Esophagus muscularis mucosa (tissue), 4 donors: ENCODE measurements at regions of chr20 and their contacts with region 1.

Region 1: GRCh38 chr20:32091888-32092346 is 17.6 kb upstream of the TM9SF4 start:
- DNase-seq: no peak
- H3K4me3 ChIP-seq: no peak overlapping the region
- H3K27ac ChIP-seq: no peak overlapping the region
- H3K4me1 ChIP-seq: no peaks in the 10 kb centered on the region
- H3K27me3 ChIP-seq: peaks cover 0 to 8% (median 0%) of the 10 kb centered on the region in 4 donors
- CTCF ChIP-seq: peak; percentile 64 to 96 (median 78)
- EP300 ChIP-seq: no peak
- POLR2A ChIP-seq: no peak

Region 2: GRCh38 chr20:31859998-31860709 is 231.8 kb before region 1 on chr20:
- intact Hi-C with region 1: loop called (anchors 10 kb)
- DNase-seq: no peak
- H3K4me3 ChIP-seq: peak overlapping the region; percentile 59 to 71 (median 61)
- H3K27ac ChIP-seq: no peak overlapping the region
- H3K4me1 ChIP-seq: peaks cover 20 to 25% (median 23%) of the 10 kb centered on the region in 4 donors
- H3K27me3 ChIP-seq: peaks cover 0 to 56% (median 6%) of the 10 kb centered on the region in 4 donors
- CTCF ChIP-seq: no peak
- EP300 ChIP-seq: no peak
- POLR2A ChIP-seq: no peak

Region 3: DNA sequence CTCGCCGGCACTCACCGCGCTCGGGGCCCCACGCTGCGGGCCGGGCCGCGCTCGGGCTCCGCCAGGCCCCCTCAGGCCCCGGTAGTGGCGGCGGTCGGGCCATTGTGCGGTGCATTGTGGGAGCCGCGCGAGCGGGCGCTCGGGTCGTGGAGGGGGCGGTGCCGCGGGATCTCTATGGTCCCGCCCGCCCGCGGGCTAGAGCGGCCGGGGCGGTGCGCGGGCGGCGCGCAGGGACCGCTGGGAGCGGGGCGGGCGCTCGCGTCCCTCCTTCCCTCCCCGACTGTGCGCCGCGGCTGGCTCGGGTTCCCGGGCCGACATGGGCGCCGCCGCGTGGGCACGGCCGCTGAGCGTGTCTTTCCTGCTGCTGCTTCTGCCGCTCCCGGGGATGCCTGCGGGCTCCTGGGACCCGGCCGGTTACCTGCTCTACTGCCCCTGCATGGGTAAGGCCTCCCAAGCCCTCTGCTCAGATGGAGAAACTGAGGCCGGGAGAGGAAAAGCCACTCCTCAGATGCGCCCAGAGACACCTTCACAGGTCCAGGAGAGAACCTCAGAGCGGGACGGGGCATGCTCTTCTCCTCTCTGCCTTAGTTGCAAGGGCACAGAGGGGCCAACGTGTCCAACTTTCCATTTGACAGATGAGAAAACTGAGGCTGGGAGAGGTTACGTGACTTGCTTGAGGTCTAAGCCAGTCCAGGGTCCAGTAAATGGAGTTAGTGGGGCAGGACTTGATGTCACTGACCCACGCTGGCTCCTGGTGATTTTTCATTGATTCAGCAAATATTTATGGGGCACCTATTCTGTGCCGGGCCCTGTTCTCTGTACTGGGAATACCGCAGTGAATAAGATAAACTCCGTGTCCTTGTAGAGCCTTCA is 115.9 kb after region 1 on chr20 and contains the starts of genes PLAGL2 and POFUT1:
- intact Hi-C with region 1: no loop called
- DNase-seq: peak; percentile 93
- H3K4me3 ChIP-seq: peak within 1 kb of the TSS; percentile 94 to 99 (median 97)
- H3K27ac ChIP-seq: peak within 1 kb of the TSS; percentile 88 to 92 (median 91)
- H3K4me1 ChIP-seq: peaks cover 45 to 69% (median 60%) of the 10 kb centered on the region in 4 donors
- H3K27me3 ChIP-seq: no peaks in the 10 kb centered on the region
- CTCF ChIP-seq: peak; percentile 32 to 44 (median 42)
- EP300 ChIP-seq: no peak
- POLR2A ChIP-seq: no peak
- total RNA-seq, gene PLAGL2: 5.4 to 10.8 (median 8.0) TPM
- total RNA-seq, gene POFUT1: 21.7 to 31.9 (median 29.8) TPM

Region 4: DNA sequence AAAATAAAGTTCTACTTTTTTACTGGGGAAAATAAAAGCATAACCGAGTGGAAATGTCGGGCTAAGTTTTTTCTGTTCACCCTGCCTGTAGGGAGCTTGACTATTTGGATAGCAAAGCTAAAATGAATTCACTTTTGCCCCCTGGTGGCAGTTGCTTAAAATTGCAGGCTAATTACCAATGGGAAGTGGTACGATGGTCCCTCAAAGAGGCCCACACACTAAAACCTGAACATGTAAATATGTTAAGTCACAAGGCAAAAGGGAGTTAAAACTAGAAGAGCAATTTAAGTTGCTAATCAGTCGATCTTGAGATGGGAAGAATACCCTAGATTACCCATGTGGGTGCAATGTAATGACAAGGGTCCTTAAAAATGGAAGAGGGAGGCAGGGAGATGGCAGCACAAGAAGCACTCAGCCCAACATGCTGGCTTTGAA is 913.2 kb after region 1 on chr20:
- intact Hi-C with region 1: no loop called
- DNase-seq: no peak
- H3K4me3 ChIP-seq: no peak overlapping the region
- H3K27ac ChIP-seq: no peak overlapping the region
- H3K4me1 ChIP-seq: no peaks in the 10 kb centered on the region
- H3K27me3 ChIP-seq: no peaks in the 10 kb centered on the region
- CTCF ChIP-seq: peak in 2 of 3 experiments; percentile 9 to 15
- EP300 ChIP-seq: no peak
- POLR2A ChIP-seq: no peak